ENCODE measurements at regions of chr17 and their contacts with region 1.

Region 1: GRCh38 chr17:71251951-71252350 is 868.9 kb upstream of the SOX9 start:
- DNase-seq: no peak
- ATAC-seq: no peak
- H3K4me3 ChIP-seq: no peak overlapping the region
- H3K27ac ChIP-seq: no peak overlapping the region
- H3K4me1 ChIP-seq: no peaks in the 10 kb centered on the region
- H3K27me3 ChIP-seq: no peaks in the 10 kb centered on the region
- CTCF ChIP-seq: no peak

Region 2: DNA sequence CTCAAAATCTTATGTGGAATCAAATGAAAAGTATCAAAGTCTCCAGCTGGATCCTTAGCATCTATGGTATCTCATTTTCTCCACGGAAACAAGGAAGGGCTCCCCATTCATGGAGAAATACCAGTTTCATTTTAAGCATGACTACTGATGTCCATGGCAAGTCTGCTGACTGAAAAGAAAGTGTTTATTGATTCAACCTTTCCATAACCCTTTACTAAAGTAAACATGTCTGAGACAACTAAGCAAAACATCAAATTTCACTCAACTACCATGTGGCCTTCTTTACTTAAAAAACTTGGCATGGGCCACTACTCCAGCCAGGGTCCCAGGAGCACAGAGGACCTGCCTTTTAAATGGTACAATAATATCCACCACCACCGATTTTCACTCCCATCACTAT is 59.1 kb before region 1 on chr17:
- intact Hi-C with region 1: loop called in 1 of 10 experiments (anchors 10 kb)
- DNase-seq: no peak
- ATAC-seq: no peak
- H3K4me3 ChIP-seq: no peak overlapping the region
- H3K27ac ChIP-seq: no peak overlapping the region
- H3K4me1 ChIP-seq: no peaks in the 10 kb centered on the region
- H3K27me3 ChIP-seq: no peaks in the 10 kb centered on the region
- CTCF ChIP-seq: no peak

Region 3: DNA sequence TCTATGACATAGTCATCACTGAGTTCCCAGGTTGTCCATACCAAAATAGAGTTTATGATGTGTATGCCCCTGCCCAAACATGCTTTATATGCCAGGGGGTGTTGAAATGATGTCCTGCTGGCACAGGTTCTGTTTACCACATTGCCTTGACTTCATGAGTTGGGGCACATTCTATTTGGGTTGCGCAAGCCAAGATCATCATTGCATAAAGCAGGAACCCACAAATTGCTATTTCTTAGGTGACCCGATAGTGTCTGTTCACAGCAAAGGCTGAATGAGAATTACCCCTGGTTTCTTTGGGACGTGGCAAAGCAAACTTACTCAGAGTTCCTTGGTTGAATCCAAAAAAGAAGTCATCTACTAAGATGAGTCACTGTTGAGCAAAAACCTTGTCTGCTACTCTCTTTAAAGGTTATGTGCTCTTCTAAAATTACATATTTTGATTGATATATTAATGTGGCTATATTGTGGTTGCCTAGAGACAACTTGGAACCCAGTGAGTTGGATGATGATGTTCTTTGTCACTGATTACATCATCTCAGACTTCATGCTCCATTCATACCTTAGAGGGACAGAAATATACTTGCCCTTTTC is 43.7 kb before region 1 on chr17:
- intact Hi-C with region 1: loop called in 1 of 10 experiments (anchors 1 kb)
- DNase-seq: no peak
- ATAC-seq: no peak
- H3K4me3 ChIP-seq: no peak overlapping the region
- H3K27ac ChIP-seq: no peak overlapping the region
- H3K4me1 ChIP-seq: no peaks in the 10 kb centered on the region
- H3K27me3 ChIP-seq: no peaks in the 10 kb centered on the region
- CTCF ChIP-seq: no peak

Measured in heart right ventricle (tissue), 16 donors.